ENCODE measurements at regions of chr22 and their contacts with region 1.

Region 1: DNA sequence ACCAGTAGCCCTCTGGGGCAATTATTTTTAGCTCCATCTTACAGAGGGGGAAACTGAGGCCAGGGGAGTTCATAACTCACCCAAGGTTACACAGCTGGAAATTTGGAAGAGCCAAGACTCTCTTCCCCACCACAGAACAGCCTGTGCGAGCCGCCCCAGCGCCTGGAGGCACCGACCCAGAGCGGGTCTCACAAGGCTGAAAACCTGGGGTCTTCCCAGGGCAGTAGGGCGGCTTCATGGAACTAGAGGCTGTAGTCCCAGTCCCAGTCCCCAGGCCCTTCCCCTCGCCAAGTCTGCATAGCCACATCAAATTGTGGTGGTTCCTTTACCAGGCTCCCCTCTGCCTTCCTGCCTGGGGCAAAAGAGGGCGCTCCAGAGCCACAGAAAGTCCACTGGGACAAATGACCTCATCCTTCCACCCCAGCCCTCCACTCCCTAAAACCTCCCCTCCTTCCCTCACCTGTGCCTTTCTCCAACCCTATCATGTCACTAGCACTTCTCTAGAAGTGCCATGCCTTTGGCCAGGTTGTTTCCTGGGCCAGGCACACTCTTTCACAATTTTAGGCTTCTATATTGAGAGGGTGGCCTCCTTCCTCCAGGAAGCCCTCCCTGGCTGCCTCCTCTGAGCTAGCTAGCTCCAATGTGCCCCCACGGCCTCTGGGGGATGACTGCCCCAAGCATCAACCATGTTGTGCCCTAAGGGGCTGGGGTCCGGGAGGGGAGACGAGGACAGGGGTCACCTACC is 15.2 kb upstream of the CDC42EP1 start:
- DNase-seq: peak; percentile 30
- H3K4me3 Mint-ChIP-seq: no peak overlapping the region
- H3K27ac Mint-ChIP-seq: peak overlapping the region; percentile 46
- H3K4me1 Mint-ChIP-seq: peaks cover 32% of the 10 kb centered on the region
- H3K27me3 Mint-ChIP-seq: peaks cover 11% of the 10 kb centered on the region

Region 2: DNA sequence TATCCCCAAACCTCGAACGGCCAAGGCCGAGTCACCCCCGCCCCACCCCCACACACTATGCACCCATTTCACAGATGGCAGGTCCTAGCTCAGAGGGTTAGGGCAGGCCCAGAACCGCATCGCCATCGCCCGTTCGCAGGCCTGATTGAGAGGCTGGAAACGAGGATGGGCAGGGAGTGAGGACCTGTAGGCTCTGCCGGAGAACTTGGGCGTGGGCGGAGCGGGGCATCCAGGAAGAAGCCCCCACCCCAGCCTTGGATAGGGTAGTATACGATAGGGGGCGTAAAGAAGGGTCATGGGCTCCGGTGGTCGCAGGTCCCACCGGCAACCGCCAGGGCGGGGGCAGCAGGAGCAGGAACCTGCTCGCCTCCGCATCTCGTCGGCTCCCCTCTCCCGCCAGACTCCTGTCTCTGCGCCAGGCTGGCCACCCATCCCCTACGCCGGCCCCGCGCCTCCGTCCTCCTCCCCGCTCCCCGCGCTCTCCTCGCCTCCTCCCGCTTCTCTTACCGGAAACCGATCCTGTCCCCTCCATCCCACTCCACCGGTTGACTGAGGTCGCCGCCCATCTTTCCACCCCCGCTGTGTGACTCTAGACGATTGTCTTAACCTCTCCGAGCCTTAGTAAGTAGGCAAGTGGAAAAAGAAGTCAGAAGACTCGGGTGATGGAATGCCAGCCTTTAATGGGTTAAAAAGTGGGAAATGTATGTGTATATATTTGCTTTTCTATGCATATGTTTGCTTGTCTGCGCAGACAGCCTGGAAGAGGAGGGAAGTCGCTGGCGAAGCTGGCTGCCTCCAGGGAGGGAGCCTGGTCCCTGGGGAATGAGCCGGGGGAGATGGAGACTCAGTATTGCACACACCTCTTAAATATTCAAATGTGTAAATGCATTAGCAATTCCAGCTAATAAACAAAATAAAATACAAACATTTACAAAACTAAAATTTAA is 210.0 kb before region 1 on chr22:
- intact Hi-C with region 1: no loop called
- DNase-seq: no peak
- H3K4me3 Mint-ChIP-seq: no peak overlapping the region
- H3K27ac Mint-ChIP-seq: no peak overlapping the region
- H3K4me1 Mint-ChIP-seq: peaks cover 5% of the 10 kb centered on the region
- H3K27me3 Mint-ChIP-seq: peaks cover 43% of the 10 kb centered on the region

Region 3: DNA sequence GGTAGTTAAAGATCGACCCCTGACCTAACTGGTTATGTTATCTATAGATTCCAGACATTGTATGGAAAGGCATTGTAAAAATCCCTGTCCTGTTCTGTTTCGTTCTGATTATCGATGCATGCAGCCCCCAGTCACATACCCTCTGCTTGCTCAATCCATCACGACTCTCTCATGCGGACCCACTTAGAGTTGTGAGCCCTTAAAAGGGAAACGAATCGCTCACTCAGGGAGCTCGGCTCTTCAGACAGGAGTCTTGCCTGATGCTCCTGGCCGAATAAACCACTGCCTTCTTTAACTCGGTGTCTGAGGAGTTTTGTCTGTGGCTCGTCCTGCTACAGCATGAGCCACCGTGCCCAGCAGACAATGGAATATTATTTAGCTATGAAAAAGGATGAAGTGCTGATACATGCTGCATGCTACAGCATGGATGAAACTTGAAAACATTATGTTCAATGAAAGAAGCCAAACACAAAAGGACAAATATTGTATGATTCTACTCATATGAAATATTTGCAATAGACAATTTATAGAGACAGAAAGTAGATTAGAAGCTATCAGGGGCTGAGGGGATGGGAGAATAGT is 46.8 kb after region 1 on chr22:
- intact Hi-C with region 1: loop called (anchors 1 kb)
- DNase-seq: no peak
- H3K4me3 Mint-ChIP-seq: peak overlapping the region; percentile 79
- H3K27ac Mint-ChIP-seq: no peak overlapping the region
- H3K4me1 Mint-ChIP-seq: peaks cover 13% of the 10 kb centered on the region
- H3K27me3 Mint-ChIP-seq: peaks cover 11% of the 10 kb centered on the region

Measured in activated T-helper 1 cell treated with anti-CD3 and anti-CD28 coated beads, Interleukin-12 subunit alpha, Interleukin-12 subunit beta, Interleukin-2, Interleukin-4 antibody, amounts not matched to agents 30 ng/mL and 10 ng/mL and 1 ng/mL, durations not matched to agents 14 hours and 24 hours and 36 hours (primary cell).